MCF 10A (cell line): ENCODE measurements at regions of chr1 and their contacts with region 1.

Region 1: GRCh38 chr1:52404116-52404986 is at the starts of genes ORC1 and PRPF38A:
- DNase-seq: peak; percentile 98
- H3K4me3 Mint-ChIP-seq: peak within 1 kb of the TSS; percentile 100
- H3K27ac Mint-ChIP-seq: peak within 1 kb of the TSS; percentile 97
- H3K4me1 Mint-ChIP-seq: peaks cover 7% of the 10 kb centered on the region
- H3K27me3 Mint-ChIP-seq: no peaks in the 10 kb centered on the region
- CTCF ChIP-seq: peak; percentile 36
- total RNA-seq, gene ORC1: 1.8 and 2.7 TPM in 2 replicates
- total RNA-seq, gene PRPF38A: 63.8 TPM in 2 replicates

Region 2: DNA sequence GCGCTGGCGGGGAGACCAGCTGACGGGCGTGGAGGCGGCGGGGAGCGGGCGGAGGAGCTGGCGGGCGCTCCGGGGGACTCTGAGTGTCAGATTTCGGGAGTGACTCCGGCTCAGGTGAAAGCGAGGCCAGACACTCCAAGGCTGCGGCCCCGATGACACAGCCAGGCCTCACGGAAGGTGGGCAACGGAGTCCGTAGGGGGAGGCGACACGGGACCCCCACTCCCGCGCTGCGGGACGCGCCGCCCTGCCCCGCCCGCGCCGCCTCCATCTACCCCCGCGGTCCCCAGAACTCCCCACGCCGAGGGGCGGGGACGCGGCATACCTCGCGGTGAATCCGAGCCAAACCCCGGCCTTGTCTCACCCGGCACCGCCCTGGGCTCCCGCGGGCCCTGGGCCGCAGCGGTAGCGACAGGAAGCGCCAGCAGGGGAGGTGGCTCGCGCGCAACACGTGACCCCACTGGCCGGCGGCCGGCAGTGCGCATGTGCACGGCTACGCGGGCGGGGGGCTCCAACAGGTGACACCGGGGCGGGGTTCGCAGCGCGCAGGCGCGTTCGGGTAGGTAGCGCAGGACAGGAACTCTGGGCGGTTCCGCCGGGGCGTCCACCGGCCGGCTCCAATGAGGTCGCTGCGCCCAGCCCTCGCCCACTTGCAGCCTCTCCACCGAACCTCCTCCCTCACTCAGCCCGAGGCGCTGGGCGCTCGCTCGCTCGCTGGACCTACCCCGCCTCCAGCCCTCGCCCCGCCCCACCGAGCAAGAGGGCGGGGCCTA is 38.4 kb before region 1 on chr1 and contains the start of gene CC2D1B:
- CTCF ChIA-PET with region 1: interaction called, 5 read pairs
- POLR2A ChIA-PET with region 1: interaction called, 46 read pairs
- intact Hi-C with region 1: loop called (anchors 5 kb)
- DNase-seq: peak; percentile 98
- H3K4me3 Mint-ChIP-seq: peak within 1 kb of the TSS; percentile 99
- H3K27ac Mint-ChIP-seq: peak within 1 kb of the TSS; percentile 95
- H3K4me1 Mint-ChIP-seq: peaks cover 21% of the 10 kb centered on the region
- H3K27me3 Mint-ChIP-seq: no peaks in the 10 kb centered on the region
- CTCF ChIP-seq: no peak
- total RNA-seq, gene CC2D1B: 28.4 and 29.5 TPM in 2 replicates

Region 3: DNA sequence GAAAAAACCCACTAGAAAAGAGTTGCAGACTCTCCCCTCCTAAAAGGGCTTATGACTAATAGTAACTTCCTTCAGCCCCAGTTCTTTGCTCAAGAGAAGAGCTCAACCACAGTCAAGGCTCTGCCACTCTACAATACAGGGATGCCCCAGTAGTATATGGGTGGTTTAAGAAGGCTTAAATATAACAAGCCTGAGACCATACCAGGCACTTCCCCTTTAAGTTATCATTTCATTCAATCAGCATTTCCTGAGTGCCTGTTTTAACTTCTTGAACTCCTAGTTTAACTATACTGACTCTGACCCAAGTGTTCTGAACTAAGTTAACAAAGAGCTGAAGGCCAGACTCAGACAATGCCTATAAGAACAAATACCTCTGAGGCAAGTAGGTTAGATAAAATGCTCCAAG is 19.9 kb after region 1 on chr1:
- CTCF ChIA-PET with region 1: interaction called, 3 read pairs
- POLR2A ChIA-PET with region 1: interaction called, 13 read pairs
- intact Hi-C with region 1: no loop called
- DNase-seq: no peak
- H3K4me3 Mint-ChIP-seq: no peak overlapping the region
- H3K27ac Mint-ChIP-seq: peak overlapping the region; percentile 13
- H3K4me1 Mint-ChIP-seq: peaks cover 5% of the 10 kb centered on the region
- H3K27me3 Mint-ChIP-seq: no peaks in the 10 kb centered on the region
- CTCF ChIP-seq: no peak

Region 4: DNA sequence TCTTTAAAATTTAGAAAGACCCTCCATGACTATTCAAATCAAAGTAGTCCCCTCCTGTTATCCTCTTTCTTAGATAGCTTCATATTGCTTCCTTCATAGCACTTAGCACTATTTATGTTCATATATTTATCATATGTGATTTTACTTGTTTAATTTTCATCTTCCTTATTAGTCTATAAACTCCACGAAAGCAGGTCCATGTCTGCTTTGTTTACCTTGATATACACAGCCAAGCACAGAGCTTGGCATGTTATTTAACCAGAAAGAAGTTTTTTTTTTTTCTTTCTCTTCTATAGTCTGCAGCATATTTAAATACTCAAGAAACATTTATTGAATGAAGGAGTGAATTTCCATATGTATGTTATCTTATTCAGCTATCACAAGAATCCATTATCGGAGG is 558.8 kb after region 1 on chr1:
- CTCF ChIA-PET with region 1: no interaction called
- POLR2A ChIA-PET with region 1: no interaction called
- intact Hi-C with region 1: no loop called
- DNase-seq: no peak
- H3K4me3 Mint-ChIP-seq: no peak overlapping the region
- H3K27ac Mint-ChIP-seq: no peak overlapping the region
- H3K4me1 Mint-ChIP-seq: no peaks in the 10 kb centered on the region
- H3K27me3 Mint-ChIP-seq: no peaks in the 10 kb centered on the region
- CTCF ChIP-seq: no peak